ENCODE measurements at regions of chr16 and their contacts with region 1.

Region 1: GRCh38 chr16:48164907-48165726 is 9.3 kb upstream of the ABCC12 start:
- DNase-seq: peak; percentile 27 to 76 (median 62)
- H3K4me3 ChIP-seq: no peak overlapping the region
- H3K27ac ChIP-seq: no peak overlapping the region
- H3K4me1 ChIP-seq: no peaks in the 10 kb centered on the region
- H3K27me3 ChIP-seq: no peaks in the 10 kb centered on the region
- CTCF ChIP-seq: peak; percentile 40 to 57 (median 44)
- EP300 ChIP-seq: no peak
- POLR2A ChIP-seq: no peak

Region 2: DNA sequence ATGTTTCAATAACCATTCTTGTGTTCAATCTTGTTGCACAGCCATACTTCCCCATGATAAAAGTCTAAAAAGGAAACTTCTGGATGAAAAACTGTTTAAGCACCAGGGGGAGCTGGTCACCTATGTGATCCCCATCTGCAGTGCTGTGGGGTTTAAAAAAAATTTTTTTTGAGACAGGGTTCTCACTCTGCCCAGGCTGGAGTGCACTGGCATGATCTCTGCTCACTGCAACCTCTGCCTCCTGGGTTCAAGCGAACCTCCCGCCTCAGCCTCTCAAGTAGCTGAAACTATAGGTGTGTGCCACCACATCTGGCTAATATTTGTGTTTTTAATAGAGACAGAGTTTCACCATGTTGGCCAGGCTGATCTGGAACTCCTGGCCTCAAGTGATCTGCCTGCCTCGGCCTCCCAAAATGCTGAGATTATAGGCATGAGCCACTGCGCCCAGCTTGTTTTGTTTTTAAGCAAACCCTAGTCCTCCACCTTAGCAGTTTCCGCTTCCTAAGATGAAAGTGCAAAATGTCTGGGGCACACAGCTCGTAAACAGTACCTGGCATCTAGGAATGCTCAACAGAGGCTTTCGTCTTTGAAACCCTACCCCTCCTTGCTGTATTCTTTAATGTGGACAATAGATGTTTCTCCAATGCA is 1217.1 kb before region 1 on chr16:
- intact Hi-C with region 1: loop called in 2 of 4 experiments (anchors 5 to 10 kb)
- DNase-seq: no peak
- H3K4me3 ChIP-seq: no peak overlapping the region
- H3K27ac ChIP-seq: no peak overlapping the region
- H3K4me1 ChIP-seq: no peaks in the 10 kb centered on the region
- H3K27me3 ChIP-seq: no peaks in the 10 kb centered on the region
- CTCF ChIP-seq: peak in 1 of 3 donors; percentile 12
- EP300 ChIP-seq: no peak
- POLR2A ChIP-seq: no peak

Region 3: DNA sequence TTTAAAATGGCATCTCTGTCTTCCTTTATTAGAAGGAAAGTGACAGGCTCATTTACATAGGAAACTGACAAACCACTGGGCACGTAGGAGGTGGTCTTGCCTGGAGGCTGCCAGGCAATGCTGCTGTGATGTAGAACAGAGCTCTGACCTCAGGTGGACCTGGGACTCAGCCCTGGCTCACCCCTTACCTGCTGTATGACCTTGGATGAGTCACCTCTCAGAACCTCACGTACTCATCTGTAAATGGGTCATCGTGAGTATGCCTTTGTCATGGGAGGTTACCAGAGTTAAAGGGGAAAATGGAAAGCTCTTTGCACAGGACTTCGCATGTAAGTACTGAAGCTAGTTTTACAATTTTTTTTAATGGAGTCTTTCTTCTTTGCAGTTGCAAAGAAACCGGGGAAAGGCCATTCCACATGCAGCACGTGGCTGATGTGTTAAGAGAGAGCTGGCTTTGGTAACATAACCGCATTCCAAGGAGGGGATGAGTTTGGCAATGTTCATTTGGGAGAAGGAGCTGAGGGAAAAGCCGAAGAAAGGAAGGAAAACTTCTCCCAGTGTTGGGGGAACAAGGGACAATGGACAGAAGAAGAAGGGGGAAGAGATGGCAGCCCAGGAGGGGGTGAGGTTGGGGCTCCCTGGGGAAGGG is 41.6 kb after region 1 on chr16:
- intact Hi-C with region 1: no loop called
- DNase-seq: no peak
- H3K4me3 ChIP-seq: no peak overlapping the region
- H3K27ac ChIP-seq: no peak overlapping the region
- H3K4me1 ChIP-seq: no peaks in the 10 kb centered on the region
- H3K27me3 ChIP-seq: no peaks in the 10 kb centered on the region
- CTCF ChIP-seq: no peak
- EP300 ChIP-seq: no peak
- POLR2A ChIP-seq: no peak